Common myeloid progenitor, CD34-positive (primary cell): ENCODE measurements at regions of chr17 and their contacts with region 1.

Region 1: GRCh38 chr17:50397111-50397918 is at the start of gene LRRC59:
- DNase-seq: peak; percentile 87 to 93 (median 92)
- H3K4me3 ChIP-seq: peak within 1 kb of the TSS; percentile 54 to 98 (median 94)
- H3K27ac ChIP-seq: peak within 1 kb of the TSS; percentile 85 to 95
- H3K4me1 ChIP-seq: peaks cover 5 to 22% (median 21%) of the 10 kb centered on the region in 4 experiments
- H3K27me3 ChIP-seq: no peaks in the 10 kb centered on the region

Region 2: GRCh38 chr17:50331085-50331791 is 66.1 kb before region 1 on chr17:
- CTCF ChIA-PET with region 1: no interaction called
- POLR2A ChIA-PET with region 1: no interaction called
- DNase-seq: no peak
- H3K4me3 ChIP-seq: no peak overlapping the region
- H3K27ac ChIP-seq: no peak overlapping the region
- H3K4me1 ChIP-seq: peaks cover 0 to 6% (median 4%) of the 10 kb centered on the region in 4 experiments
- H3K27me3 ChIP-seq: peaks cover 0 to 2% (median 0%) of the 10 kb centered on the region in 5 experiments

Region 3: GRCh38 chr17:50361561-50362480 is 35.5 kb before region 1 on chr17:
- CTCF ChIA-PET with region 1: interaction called, 23 read pairs
- POLR2A ChIA-PET with region 1: interaction called, 3 read pairs
- DNase-seq: peak; percentile 69 to 86 (median 84)
- H3K4me3 ChIP-seq: no peak overlapping the region
- H3K27ac ChIP-seq: peak overlapping the region in 1 of 2 experiments; percentile 21
- H3K4me1 ChIP-seq: peaks cover 0 to 6% (median 4%) of the 10 kb centered on the region in 4 experiments
- H3K27me3 ChIP-seq: no peaks in the 10 kb centered on the region

Region 4: DNA sequence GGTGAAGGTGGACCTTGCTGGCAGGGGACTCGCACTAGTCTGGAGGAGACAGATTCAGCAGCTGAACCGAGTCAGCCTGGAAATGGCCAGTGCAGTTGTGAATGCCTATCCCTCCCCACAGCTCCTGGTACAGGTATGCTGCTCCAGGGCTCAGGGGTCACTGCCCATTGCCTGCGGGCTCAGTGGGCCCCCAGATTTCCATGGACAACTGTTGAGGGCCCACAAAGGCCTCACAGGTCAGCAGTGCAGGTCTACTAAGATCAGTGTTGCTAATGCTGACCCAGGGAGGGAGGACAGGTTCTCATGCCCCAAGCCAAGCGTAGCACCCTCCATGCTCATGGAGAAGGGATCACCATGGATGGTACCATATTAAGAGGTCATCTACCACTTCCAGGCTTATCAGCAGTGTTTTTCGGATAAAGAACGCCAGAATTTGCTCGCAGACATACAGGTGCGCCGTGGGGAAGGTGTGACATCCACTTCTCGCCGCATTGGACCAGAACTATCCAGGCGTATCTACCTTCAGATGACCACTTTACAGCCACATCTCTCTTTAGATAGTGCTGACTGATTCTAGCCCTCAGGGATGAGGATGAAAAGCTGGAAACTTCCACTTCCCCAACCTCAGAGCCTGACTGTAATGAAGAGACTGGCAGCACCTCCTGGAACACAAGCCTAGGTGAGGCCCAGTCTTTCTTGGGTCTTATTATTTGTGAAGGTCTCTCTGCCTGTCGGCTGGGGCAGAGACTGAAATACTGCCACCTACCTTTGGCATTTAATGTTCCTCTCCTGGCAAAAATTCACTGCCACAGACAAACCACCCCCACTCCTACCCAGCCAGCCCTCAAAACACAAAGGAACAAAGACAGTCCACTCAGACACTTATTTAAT is 16.7 kb before region 1 on chr17:
- CTCF ChIA-PET with region 1: interaction called, 79 read pairs
- POLR2A ChIA-PET with region 1: interaction called, 3 read pairs
- DNase-seq: peak in 2 of 3 donors; percentile 33 to 34
- H3K4me3 ChIP-seq: no peak overlapping the region
- H3K27ac ChIP-seq: no peak overlapping the region
- H3K4me1 ChIP-seq: no peaks in the 10 kb centered on the region
- H3K27me3 ChIP-seq: no peaks in the 10 kb centered on the region

Region 5: DNA sequence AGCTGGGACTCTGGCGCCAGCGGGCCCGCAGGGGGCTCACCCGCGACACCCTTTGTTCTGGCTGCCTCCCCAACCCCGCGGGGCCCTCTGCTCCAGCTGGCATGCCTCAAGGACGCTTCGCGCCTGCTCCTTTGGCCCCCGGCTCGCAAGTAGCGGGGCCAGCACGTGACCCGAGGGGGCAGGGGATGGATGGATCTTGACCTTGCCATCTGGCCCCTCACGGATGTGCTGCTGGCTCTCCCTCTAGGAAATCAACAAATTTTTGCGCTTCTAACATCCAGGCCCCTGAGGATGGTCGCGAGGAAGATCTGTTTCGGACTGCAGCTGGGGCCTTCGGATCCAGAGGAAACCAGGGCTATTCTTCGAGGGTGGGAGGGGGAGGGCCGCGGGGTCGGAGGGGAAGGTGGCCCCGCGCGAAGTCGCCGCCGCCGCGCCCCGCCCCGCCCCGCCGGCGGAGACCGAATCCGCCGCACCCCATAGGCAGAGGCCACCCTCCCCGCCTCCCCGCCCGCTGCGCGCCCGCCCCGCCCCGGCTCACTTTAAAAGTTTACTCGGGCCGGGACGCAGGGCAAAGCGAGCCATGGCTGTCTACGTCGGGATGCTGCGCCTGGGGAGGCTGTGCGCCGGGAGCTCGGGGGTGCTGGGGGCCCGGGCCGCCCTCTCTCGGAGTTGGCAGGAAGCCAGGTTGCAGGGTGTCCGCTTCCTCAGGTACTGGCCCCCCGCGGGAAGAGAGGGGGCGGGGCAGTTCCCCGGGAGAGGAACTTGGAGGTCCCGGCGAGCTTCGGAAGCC is 28.6 kb after region 1 on chr17 and contains the start of gene ACSF2:
- CTCF ChIA-PET with region 1: interaction called, 16 read pairs
- POLR2A ChIA-PET with region 1: interaction called, 8 read pairs
- DNase-seq: peak; percentile 53 to 75 (median 62)
- H3K4me3 ChIP-seq: peak within 1 kb of the TSS; percentile 44 to 85 (median 79)
- H3K27ac ChIP-seq: peak within 1 kb of the TSS in 1 of 2 experiments; percentile 80
- H3K4me1 ChIP-seq: peaks cover 11 to 52% (median 44%) of the 10 kb centered on the region in 4 experiments
- H3K27me3 ChIP-seq: no peaks in the 10 kb centered on the region

Region 6: DNA sequence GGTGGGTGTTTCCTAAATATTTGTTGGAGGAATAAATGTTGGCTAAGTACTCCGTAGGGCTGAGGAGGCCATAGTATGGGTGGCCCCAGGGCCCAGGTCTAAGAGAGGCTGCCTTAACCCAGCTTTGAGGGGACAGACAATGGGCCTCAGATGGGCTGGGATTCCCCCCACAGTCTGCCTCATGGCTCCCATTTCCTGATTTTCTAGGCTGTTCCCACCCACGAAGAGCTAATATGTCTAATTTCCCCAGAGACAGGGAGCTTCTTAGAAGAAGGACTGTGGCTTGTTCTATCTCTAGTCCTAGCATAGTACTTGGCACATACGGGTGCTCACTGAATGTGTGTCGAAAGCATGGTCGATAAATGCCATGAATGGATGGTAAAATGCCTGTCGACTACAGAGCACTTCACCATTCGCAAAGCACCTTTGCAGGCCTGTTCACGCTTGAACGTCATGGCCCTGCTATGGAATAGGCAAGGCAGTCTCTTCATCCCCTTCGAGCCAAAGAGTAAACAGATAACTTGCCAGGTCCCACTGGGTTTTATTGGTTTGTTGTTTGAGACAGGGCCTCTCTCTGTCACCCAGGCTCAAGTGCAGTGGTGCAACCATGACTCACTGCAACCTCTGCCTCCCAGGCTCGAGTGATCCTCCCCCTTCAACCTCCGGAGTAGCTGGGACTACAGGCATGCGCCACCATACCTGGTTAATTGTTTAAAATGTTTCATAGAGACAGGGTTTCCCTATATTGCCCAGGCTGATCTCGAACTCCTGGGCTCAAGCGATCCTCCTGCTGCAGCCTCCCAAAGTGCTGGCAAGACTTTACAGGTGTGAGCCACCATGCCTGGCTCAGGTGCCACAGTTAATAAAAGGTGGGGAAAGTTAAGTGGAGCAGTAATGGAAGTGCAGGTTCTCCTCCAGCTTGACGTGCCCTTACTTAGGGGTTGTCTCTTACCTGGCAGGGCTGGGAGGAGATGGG is 61.7 kb after region 1 on chr17:
- CTCF ChIA-PET with region 1: no interaction called
- POLR2A ChIA-PET with region 1: no interaction called
- DNase-seq: no peak
- H3K4me3 ChIP-seq: no peak overlapping the region
- H3K27ac ChIP-seq: no peak overlapping the region
- H3K4me1 ChIP-seq: no peaks in the 10 kb centered on the region
- H3K27me3 ChIP-seq: no peaks in the 10 kb centered on the region

Region 7: GRCh38 chr17:50478391-50479381 is 81.4 kb after region 1 on chr17 and contains the start of gene RSAD1:
- CTCF ChIA-PET with region 1: interaction called, 12 read pairs
- POLR2A ChIA-PET with region 1: interaction called, 3 read pairs
- DNase-seq: peak; percentile 93 to 96 (median 95)
- H3K4me3 ChIP-seq: peak within 1 kb of the TSS; percentile 86 to 94 (median 90)
- H3K27ac ChIP-seq: peak within 1 kb of the TSS; percentile 7 to 85
- H3K4me1 ChIP-seq: peaks cover 0 to 21% (median 18%) of the 10 kb centered on the region in 4 experiments
- H3K27me3 ChIP-seq: peaks cover 0 to 4% (median 0%) of the 10 kb centered on the region in 5 experiments

Region 8: GRCh38 chr17:50495217-50495823 is 98.0 kb after region 1 on chr17:
- CTCF ChIA-PET with region 1: no interaction called
- POLR2A ChIA-PET with region 1: no interaction called
- DNase-seq: no peak
- H3K4me3 ChIP-seq: no peak overlapping the region
- H3K27ac ChIP-seq: no peak overlapping the region
- H3K4me1 ChIP-seq: no peaks in the 10 kb centered on the region
- H3K27me3 ChIP-seq: no peaks in the 10 kb centered on the region